Activated CD4-positive, alpha-beta T cell treated with anti-CD3 and anti-CD28 coated beads for 36 hours (primary cell): ENCODE measurements at regions of chr11 and their contacts with region 1.

Region 1: DNA sequence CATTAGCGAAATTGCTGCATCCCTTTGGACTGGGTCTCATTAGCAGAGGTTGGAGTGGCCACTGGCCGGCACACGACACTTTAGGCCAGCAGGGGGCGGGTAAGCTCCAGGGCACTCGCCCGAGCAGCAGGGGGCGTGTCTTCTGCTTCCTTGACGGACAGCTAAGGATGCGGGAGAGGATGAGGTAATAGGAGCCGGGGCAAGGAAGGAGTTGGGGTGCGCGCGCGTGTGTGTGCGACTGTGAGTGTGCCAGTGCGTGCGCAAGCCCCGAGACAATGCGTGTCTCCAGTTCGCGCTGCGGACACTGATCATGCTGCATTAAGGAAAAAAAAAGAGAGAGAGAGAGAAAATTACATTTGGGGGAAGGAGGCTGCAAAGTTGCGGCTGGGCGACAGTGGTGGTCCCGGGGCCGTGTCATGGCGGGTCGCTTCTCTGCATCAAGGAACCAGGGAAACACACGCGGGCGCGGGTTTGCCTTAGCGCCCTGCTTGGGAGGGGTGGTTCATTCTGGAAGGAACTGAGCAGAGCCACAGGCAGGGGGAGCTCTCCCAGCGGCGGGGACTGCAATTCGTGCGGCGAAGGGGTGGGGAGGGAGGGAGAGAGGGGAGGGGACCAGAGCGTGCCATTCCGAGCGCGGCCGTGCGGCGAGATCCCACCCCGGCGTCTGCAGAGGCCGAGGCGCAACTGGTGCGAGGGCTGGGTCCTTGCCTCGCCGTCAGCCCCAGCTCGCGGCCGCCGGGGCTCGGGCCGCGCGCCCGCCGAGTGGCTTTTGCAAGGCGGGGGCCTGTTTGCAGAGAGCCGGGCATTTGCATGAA is at the start of gene DTX4:
- DNase-seq: peak; percentile 95
- ATAC-seq: peak; percentile 86
- H3K4me3 Mint-ChIP-seq: peak within 1 kb of the TSS; percentile 70
- H3K27ac Mint-ChIP-seq: no peak within 1 kb of the TSS
- H3K4me1 Mint-ChIP-seq: peaks cover 17% of the 10 kb centered on the region
- H3K27me3 Mint-ChIP-seq: peaks cover 14% of the 10 kb centered on the region
- total RNA-seq, gene DTX4: 0.07 to 0.11 TPM

Region 2: GRCh38 chr11:59152312-59152951 is 19.3 kb before region 1 on chr11:
- CTCF ChIA-PET with region 1: interaction called, 35 read pairs
- POLR2A ChIA-PET with region 1: no interaction called
- intact Hi-C with region 1: no loop called
- DNase-seq: peak; percentile 58
- ATAC-seq: peak; percentile 97
- H3K4me3 Mint-ChIP-seq: peak overlapping the region; percentile 45
- H3K27ac Mint-ChIP-seq: peak overlapping the region; percentile 93
- H3K4me1 Mint-ChIP-seq: peaks cover 38% of the 10 kb centered on the region
- H3K27me3 Mint-ChIP-seq: no peaks in the 10 kb centered on the region

Region 3: DNA sequence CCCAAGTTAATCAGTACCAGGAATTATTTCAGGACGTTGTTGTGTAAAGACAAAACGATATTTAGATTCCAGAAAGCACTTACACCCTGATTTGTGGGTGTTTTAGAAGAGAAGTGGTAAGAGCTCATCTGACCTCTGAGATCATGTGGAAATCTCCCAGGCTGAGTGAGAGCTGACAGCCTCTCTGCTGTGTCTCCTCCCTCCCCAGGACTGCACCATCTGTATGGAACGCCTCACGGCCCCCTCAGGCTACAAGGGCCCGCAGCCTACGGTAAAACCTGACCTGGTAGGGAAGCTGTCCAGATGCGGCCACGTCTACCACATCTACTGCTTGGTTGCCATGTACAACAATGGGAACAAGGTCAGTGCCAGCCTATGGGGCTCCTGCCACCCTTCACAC is 20.2 kb after region 1 on chr11:
- CTCF ChIA-PET with region 1: interaction called, 115 read pairs
- POLR2A ChIA-PET with region 1: interaction called, 15 read pairs
- intact Hi-C with region 1: no loop called
- DNase-seq: no peak
- ATAC-seq: no peak
- H3K4me3 Mint-ChIP-seq: no peak overlapping the region
- H3K27ac Mint-ChIP-seq: no peak overlapping the region
- H3K4me1 Mint-ChIP-seq: no peaks in the 10 kb centered on the region
- H3K27me3 Mint-ChIP-seq: no peaks in the 10 kb centered on the region

Region 4: GRCh38 chr11:59283825-59284772 is 112.4 kb after region 1 on chr11:
- CTCF ChIA-PET with region 1: interaction called, 14 read pairs
- POLR2A ChIA-PET with region 1: no interaction called
- intact Hi-C with region 1: loop called (anchors 1 kb)
- DNase-seq: peak; percentile 63
- ATAC-seq: peak; percentile 81
- H3K4me3 Mint-ChIP-seq: peak overlapping the region; percentile 17
- H3K27ac Mint-ChIP-seq: no peak overlapping the region
- H3K4me1 Mint-ChIP-seq: peaks cover 14% of the 10 kb centered on the region
- H3K27me3 Mint-ChIP-seq: peaks cover 9% of the 10 kb centered on the region

Region 5: DNA sequence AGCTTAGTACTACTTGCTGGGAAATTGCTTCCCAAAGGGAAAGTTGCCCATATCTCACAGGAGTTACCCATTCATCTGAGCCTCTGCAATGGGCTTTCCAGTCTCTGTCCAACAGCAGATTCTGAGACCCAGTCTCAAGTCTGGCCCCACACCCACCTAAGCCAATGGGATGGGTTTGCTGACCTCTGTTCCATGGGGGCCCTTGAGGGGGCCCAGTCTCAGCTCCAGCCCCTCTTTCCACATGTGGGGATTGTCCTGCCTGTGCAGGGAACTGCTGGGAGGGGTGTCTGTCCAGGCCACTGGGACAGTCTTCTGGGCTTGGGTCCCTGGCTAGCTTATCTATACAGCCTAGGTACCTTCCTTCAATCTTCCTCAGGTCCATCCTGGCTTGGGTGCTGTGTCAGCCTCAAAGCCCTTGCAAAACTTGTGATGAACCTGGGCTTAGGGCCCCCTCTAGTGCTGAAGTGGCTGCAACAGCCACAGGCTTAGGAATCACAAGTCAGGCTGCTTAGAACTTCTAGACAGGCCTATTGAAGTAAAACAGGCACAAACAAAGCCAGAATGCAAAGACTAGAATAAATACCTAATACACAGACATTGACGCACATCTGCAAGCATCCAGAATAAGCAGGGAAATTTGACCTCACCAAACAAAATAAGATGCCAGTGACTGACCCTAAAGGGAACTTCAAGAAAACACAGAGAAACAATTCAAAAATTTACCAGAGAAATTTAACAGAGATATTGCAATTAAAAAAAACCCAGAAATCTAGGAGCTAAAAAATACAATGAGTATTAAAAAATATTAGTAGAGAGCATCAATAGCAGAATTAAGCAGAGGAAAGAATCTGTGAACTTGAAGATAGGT is 508.8 kb after region 1 on chr11:
- CTCF ChIA-PET with region 1: interaction called, 3 read pairs
- POLR2A ChIA-PET with region 1: no interaction called
- intact Hi-C with region 1: loop called in 1 of 2 experiments (anchors 5 kb)
- DNase-seq: peak; percentile 73
- ATAC-seq: peak; percentile 92
- H3K4me3 Mint-ChIP-seq: no peak overlapping the region
- H3K27ac Mint-ChIP-seq: no peak overlapping the region
- H3K4me1 Mint-ChIP-seq: peaks cover 10% of the 10 kb centered on the region
- H3K27me3 Mint-ChIP-seq: peaks cover 16% of the 10 kb centered on the region